Stomach (tissue), 19 donors: ENCODE measurements at regions of chr4 and their contacts with region 1.

Region 1: GRCh38 chr4:140012688-140013486 is 141.1 kb downstream of the MAML3 start:
- DNase-seq: peak; percentile 80 to 89
- H3K4me3 ChIP-seq: no peak overlapping the region
- H3K27ac ChIP-seq: peak overlapping the region in 1 of 5 donors; percentile 24
- H3K4me1 ChIP-seq: peaks cover 0 to 16% (median 9%) of the 10 kb centered on the region in 4 donors
- H3K27me3 ChIP-seq: no peaks in the 10 kb centered on the region
- CTCF ChIP-seq: peak in 5 of 7 experiments; percentile 32 to 80 (median 65)
- EP300 ChIP-seq: no peak
- POLR2A ChIP-seq: no peak

Region 2: DNA sequence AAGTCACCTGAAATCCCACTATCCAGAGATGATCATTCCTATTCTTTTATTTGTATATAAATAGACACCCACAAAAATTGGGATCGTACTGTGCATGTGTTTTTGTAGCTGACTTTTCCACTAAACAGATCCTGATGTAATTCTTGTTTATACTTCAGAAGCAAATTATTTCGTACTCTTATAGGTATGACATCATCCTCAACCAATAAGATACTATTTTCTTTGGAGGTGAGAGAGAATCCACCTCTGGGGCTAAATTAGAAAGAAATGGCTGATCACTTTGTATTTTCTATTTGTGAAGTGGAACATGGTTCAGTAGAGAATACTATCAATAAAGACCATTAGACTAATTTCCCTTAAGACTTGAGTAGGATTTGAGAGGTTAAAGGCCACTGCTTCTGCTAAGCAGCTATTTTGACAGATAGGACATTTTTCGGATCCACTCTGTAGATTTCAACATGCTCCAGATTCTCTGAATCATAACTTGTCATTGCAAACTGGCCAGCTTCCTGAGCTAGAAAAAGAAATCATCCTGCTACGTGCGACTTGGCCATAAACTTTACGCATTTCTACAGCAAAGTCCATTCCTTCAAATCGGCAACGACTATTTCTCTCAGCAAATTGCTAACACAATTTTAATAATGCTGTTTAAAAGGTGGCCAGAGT is 292.2 kb before region 1 on chr4:
- intact Hi-C with region 1: no loop called
- DNase-seq: no peak
- H3K4me3 ChIP-seq: no peak overlapping the region
- H3K27ac ChIP-seq: no peak overlapping the region
- H3K4me1 ChIP-seq: peaks cover 0 to 6% (median 3%) of the 10 kb centered on the region in 4 donors
- H3K27me3 ChIP-seq: no peaks in the 10 kb centered on the region
- CTCF ChIP-seq: no peak
- EP300 ChIP-seq: no peak
- POLR2A ChIP-seq: no peak

Region 3: DNA sequence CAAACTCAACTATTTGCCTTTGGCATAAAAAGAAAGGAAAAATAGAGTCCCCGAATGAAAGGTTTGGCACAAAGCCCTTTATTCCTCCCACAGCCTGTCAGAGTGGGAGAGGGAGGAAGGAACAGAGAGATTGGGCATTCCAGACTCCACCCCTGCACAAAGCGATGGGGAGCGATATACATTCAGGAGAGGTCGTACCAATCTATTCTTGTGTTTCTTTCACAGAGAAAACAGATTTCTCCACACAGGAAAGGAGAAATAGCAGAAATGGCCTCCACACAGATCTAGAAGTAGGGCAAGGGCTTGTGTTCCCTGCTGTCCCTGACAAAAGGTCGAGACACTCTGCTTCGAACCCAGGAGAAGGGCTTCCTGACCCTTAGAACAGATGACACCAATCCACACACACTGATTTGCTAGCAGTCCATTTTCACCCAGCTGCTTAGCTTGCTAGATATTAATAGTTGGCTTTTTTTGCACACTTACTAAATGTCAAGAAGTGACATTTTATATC is 56.3 kb before region 1 on chr4:
- intact Hi-C with region 1: no loop called
- DNase-seq: peak in 1 of 2 donors; percentile 52
- H3K4me3 ChIP-seq: peak overlapping the region in 1 of 4 donors; percentile 12
- H3K27ac ChIP-seq: peak overlapping the region in 2 of 5 donors; percentile 15 to 31
- H3K4me1 ChIP-seq: peaks cover under 1 to 21% (median 15%) of the 10 kb centered on the region in 4 donors
- H3K27me3 ChIP-seq: no peaks in the 10 kb centered on the region
- CTCF ChIP-seq: no peak
- EP300 ChIP-seq: no peak
- POLR2A ChIP-seq: no peak

Region 4: DNA sequence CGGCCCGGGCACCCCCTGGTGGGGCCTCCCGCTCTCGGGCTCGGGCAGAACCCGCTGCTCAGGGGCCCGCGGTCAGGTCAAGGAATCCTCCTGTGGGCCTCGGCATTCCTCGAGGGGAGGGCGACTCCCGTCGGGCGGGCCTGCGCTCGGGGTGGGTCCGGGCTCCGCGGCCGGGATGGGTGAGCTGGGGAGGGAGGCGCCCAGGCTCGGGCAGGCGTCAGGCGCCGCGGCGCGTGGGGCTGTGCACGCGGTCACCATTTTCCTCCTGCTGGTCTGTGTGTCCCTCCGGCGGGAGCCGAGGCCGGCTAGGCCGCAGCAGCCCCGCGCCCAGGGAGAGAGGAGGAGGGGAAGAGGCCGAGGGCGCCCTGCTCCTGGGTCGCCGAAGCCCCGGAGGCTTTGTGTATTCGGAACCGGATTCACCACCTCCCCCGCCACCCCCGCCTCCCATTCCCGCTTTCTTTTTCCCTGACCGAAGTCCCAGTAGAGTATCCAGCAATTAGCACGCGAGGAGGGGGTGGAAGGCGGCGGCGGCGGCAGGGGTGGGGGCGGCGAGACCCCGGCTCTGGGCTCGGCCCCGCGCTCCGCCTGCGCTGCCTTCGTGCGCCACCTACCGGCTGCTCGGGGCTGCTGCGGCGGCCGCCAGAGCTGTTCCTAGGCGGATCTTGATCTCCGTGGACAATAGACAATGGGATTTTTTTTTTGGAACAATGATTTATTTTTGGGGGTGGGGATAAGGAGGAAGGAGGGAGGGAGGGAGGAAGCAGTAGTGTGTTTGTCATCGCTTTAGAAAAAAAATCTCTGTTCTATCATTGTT is 240.1 kb after region 1 on chr4:
- intact Hi-C with region 1: loop called (anchors 5 kb)
- DNase-seq: peak; percentile 74 to 94
- H3K4me3 ChIP-seq: peak overlapping the region; percentile 51 to 75 (median 58)
- H3K27ac ChIP-seq: peak overlapping the region; percentile 89 to 97 (median 92)
- H3K4me1 ChIP-seq: peaks cover 20 to 45% (median 35%) of the 10 kb centered on the region in 4 donors
- H3K27me3 ChIP-seq: no peaks in the 10 kb centered on the region
- CTCF ChIP-seq: peak in 5 of 7 experiments; percentile 64 to 98 (median 94)
- EP300 ChIP-seq: no peak
- POLR2A ChIP-seq: no peak

Region 5: DNA sequence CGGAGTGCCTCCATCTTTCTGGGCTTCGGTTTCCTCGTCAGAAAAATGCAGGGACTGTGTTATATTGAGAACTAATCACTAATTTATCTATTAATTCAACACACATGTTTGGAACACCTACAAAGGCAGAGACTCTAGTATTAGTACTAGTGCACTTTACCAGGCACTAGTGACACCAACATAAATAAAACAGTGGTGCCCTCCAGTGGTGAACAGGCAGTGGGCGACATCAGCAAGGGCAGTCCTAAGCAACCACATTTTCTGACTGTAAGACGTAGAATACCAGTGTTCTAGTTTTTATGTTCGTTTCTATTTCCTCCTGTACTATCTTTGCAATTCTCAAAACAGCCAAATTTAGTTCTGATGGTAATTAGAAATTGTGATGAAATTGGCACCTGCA is 624.9 kb after region 1 on chr4:
- intact Hi-C with region 1: no loop called
- DNase-seq: peak in 1 of 2 donors; percentile 66
- H3K4me3 ChIP-seq: no peak overlapping the region
- H3K27ac ChIP-seq: no peak overlapping the region
- H3K4me1 ChIP-seq: peaks cover 6 to 31% (median 11%) of the 10 kb centered on the region in 4 donors
- H3K27me3 ChIP-seq: no peaks in the 10 kb centered on the region
- CTCF ChIP-seq: peak in 3 of 7 experiments; percentile 14 to 24 (median 19)
- EP300 ChIP-seq: no peak
- POLR2A ChIP-seq: no peak

Region 6: GRCh38 chr4:140653718-140654494 is 641.0 kb after region 1 on chr4:
- intact Hi-C with region 1: no loop called
- DNase-seq: peak in 1 of 2 donors; percentile 68
- H3K4me3 ChIP-seq: no peak overlapping the region
- H3K27ac ChIP-seq: no peak overlapping the region
- H3K4me1 ChIP-seq: no peaks in the 10 kb centered on the region
- H3K27me3 ChIP-seq: no peaks in the 10 kb centered on the region
- CTCF ChIP-seq: no peak
- EP300 ChIP-seq: no peak
- POLR2A ChIP-seq: no peak